ENCODE measurements at regions of chr5 and their contacts with region 1.

Region 1: GRCh38 chr5:33969572-33970452 is 14.7 kb downstream of the SLC45A2 start:
- DNase-seq: no peak
- H3K4me3 ChIP-seq: no peak overlapping the region
- H3K27ac ChIP-seq: no peak overlapping the region
- H3K4me1 ChIP-seq: no peaks in the 10 kb centered on the region
- H3K27me3 ChIP-seq: no peaks in the 10 kb centered on the region
- CTCF ChIP-seq: peak in 2 of 3 experiments; percentile 74 to 84; a peak in 3 of 4 replicates
- EP300 ChIP-seq: no peak
- POLR2A ChIP-seq: no peak
- RAD21 ChIP-seq: peak; percentile 90 to 91

Region 2: GRCh38 chr5:33734537-33734936 is 235.3 kb before region 1 on chr5:
- CTCF ChIA-PET with region 1: interaction called, 16 read pairs
- POLR2A ChIA-PET with region 1: no interaction called
- DNase-seq: no peak
- H3K4me3 ChIP-seq: no peak overlapping the region
- H3K27ac ChIP-seq: no peak overlapping the region
- H3K4me1 ChIP-seq: peaks cover 0 to 4% (median under 1%) of the 10 kb centered on the region in 4 experiments; a peak in 1 of 7 replicates
- H3K27me3 ChIP-seq: no peaks in the 10 kb centered on the region
- CTCF ChIP-seq: peak; percentile 1 to 16 (median 16); a peak in 3 of 4 replicates
- EP300 ChIP-seq: no peak
- POLR2A ChIP-seq: no peak
- RAD21 ChIP-seq: peak; percentile 38 to 48; a peak in 3 of 4 replicates

Region 3: DNA sequence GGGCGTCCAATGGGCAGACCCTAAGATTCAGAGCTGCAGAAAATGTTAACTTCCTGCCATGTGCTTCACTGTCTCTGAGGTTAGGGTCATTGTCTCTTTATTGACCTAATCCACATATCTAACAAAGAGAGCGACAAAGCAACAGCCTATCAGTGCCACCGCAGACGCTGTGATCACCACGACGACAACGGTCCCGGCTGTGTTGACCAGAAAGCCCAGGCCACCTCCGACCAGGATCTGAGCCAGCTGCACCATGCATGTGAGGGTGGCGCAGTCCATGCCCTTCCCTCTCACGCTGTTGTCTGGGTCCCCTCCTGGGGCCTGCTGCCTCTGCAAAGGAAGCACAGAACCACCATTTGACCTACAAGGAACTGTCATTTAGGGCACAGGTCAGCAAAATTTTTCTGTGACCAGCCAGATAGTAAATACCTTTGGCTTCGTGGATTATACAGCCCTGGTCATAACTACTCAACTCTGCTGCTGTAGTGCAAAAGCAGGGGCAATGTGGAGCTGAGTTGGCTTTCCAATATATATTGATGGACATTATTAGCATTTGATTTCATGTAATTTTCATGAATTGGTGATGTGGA is 25.2 kb before region 1 on chr5:
- CTCF ChIA-PET with region 1: interaction called, 10 read pairs
- POLR2A ChIA-PET with region 1: no interaction called
- DNase-seq: no peak
- H3K4me3 ChIP-seq: no peak overlapping the region
- H3K27ac ChIP-seq: no peak overlapping the region
- H3K4me1 ChIP-seq: peaks cover 0 to 2% (median under 1%) of the 10 kb centered on the region in 4 experiments; a peak in 1 of 7 replicates
- H3K27me3 ChIP-seq: no peaks in the 10 kb centered on the region
- CTCF ChIP-seq: no peak
- EP300 ChIP-seq: no peak
- POLR2A ChIP-seq: no peak
- RAD21 ChIP-seq: no peak

Region 4: DNA sequence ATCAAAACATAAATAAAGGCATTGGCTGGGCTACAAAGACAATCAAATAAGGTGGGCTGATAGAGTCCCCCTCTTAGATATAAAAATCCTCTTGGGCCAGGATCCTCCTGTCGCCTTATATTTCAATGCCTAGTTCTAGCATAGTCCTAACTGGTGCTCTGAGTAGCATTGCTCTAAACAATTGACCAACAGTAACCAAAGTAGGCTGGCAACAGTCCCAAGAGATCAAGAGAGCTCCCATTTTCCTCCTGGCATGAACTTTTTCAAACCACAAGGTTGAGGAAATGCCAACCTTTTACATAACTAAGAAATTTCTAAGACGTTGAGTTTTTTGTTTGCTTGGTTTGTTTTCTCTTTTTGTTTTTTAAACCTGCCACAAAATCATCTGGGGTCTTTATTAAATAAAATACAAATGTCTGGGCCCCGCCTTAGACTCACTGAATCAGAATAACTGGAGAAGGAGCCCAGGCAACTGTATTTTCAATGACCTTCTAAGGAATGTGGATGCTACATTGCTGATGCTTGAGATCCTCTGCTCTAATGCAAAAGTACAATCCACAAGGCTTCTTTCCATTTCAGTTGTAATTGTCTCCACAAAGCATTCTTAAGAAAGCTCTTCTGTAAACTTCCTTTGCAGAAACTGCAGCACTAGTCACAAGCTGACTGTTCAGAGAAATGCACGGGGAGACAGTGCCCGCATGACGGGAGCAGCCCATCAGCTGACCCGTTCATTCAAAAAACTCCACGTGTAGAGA is 11.8 kb after region 1 on chr5:
- CTCF ChIA-PET with region 1: interaction called, 10 read pairs
- POLR2A ChIA-PET with region 1: interaction called, 6 read pairs
- DNase-seq: no peak
- H3K4me3 ChIP-seq: no peak overlapping the region
- H3K27ac ChIP-seq: no peak overlapping the region
- H3K4me1 ChIP-seq: peaks cover 0 to 15% (median 3%) of the 10 kb centered on the region in 4 experiments; a peak in 2 of 7 replicates
- H3K27me3 ChIP-seq: no peaks in the 10 kb centered on the region
- CTCF ChIP-seq: no peak
- EP300 ChIP-seq: no peak
- POLR2A ChIP-seq: no peak
- RAD21 ChIP-seq: no peak

Measured in H1 (cell line).